ENCODE measurements at regions of chr2 and their contacts with region 1.

Region 1: GRCh38 chr2:152635635-152636298 is 81.5 kb downstream of the PRPF40A start:
- DNase-seq: peak; percentile 46 to 60
- ATAC-seq: peak; percentile 63 to 81; a peak in 4 of 6 replicates
- H3K4me3 ChIP-seq: no peak overlapping the region
- H3K27ac ChIP-seq: no peak overlapping the region
- H3K4me1 ChIP-seq: no peaks in the 10 kb centered on the region
- CTCF ChIP-seq: peak; percentile 89
- EP300 ChIP-seq: no peak
- POLR2A ChIP-seq: no peak
- RAD21 ChIP-seq: peak; percentile 87 to 89

Region 2: DNA sequence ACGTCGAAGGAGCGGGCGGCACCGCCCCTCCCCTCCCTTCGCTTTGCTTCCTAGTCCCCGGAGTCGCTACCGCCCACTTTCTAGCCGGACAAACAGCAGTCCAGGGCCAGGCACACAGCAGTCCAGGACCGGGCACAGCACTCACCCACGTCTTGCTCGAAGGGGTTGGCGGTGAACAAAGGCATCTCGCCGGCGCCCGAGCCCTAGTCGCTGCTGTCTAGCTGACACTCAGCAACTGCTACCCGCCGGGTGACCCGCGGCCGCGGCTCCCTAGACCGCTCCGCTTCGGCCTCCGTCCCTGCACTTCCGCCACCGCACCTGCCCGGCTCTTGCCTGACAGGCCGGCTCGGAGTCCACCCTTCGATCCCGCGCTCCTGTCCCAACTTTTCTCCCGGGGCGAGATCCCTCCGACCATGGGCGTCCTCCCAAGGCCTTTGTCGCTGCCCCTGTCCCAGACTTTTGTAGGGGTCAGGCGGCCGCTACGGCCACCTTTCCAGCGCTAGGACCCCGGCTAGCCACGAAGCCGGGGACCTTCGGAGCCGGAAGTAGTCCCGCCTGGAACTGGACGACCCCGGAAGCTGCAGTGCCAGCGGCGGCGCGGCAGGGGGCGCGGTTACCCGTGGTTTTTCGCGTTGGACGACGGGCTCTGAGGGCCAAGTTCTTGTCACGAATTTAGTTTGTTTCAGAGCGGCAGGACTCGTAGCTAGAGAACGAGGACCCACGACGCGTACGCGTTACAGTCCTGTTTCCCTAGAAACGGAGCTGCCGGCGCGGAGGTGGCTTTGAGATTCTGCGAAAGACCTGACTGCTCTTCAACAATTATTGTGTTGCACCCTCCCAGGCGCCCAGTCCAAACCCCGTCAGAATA is 460.1 kb before region 1 on chr2 and contains the start of gene STAM2:
- CTCF ChIA-PET with region 1: interaction called, 52 read pairs
- POLR2A ChIA-PET with region 1: interaction called, 4 read pairs
- DNase-seq: peak; percentile 88 to 93
- ATAC-seq: peak; percentile 91
- H3K4me3 ChIP-seq: peak within 1 kb of the TSS; percentile 64
- H3K27ac ChIP-seq: peak within 1 kb of the TSS; percentile 94 to 97
- H3K4me1 ChIP-seq: peaks cover 33% of the 10 kb centered on the region
- CTCF ChIP-seq: peak; percentile 92
- EP300 ChIP-seq: no peak
- POLR2A ChIP-seq: peak; percentile 84
- RAD21 ChIP-seq: peak; percentile 92 to 97
- polyA plus RNA-seq, gene STAM2: 25.7 and 34.5 TPM in 2 replicates

Region 3: DNA sequence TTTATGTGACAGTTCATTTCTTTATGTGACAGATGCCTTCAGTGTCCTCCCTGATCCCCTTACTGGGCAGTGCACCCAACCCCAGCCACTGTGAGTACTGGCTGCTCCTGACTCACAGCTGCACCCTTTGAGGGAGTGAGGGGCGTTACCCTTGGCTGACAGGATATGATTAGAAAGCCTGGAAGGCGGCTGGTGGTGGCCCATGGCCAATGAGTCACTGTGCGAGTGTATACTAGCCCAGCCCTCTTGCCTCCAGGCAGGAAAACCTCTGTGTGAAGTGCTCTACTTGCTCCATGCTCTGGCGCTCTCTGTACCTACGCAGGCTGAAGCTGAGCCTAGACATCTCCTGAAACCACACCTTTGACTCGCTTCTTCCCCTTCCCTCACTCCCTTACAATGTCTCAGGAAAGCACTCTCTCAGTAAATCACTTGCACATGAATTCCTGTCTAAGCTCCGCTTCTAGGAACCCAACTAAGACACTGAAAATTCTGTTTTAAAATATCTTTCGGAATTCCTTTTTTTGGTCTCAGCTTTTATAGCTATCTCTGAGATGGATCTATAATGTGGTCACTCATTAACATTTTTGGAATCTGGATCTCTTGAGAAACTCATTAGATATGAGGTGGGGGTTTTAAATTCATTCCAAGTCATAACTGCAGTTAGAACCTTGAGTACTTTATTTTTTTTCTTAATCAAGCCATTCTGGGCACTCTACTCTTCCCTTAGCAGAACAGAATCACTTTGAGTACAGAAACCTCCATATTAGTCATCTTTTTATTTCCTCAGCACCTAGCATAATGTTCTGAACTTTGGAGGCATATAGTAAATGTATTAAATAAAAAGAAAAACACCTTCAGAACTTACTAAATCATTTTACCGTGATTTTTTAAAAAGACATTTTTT is 435.0 kb before region 1 on chr2:
- CTCF ChIA-PET with region 1: interaction called, 21 read pairs
- POLR2A ChIA-PET with region 1: no interaction called
- DNase-seq: peak; percentile 82 to 92
- ATAC-seq: peak; percentile 100
- H3K4me3 ChIP-seq: no peak overlapping the region
- H3K27ac ChIP-seq: peak overlapping the region; percentile 52 to 74
- H3K4me1 ChIP-seq: peaks cover 16% of the 10 kb centered on the region
- CTCF ChIP-seq: no peak
- EP300 ChIP-seq: peak in 1 of 2 experiments; percentile 45; a peak in 2 of 5 replicates
- POLR2A ChIP-seq: no peak
- RAD21 ChIP-seq: peak; percentile 14 to 51; a peak in 3 of 5 replicates

Region 4: GRCh38 chr2:152613235-152613634 is 22.5 kb before region 1 on chr2:
- CTCF ChIA-PET with region 1: interaction called, 12 read pairs
- POLR2A ChIA-PET with region 1: no interaction called
- DNase-seq: no peak
- ATAC-seq: no peak
- H3K4me3 ChIP-seq: no peak overlapping the region
- H3K27ac ChIP-seq: no peak overlapping the region
- H3K4me1 ChIP-seq: peaks cover 7% of the 10 kb centered on the region; the same call in 2 of the 3 replicates
- CTCF ChIP-seq: no peak
- EP300 ChIP-seq: no peak
- POLR2A ChIP-seq: no peak
- RAD21 ChIP-seq: no peak

Region 5: GRCh38 chr2:152790883-152791282 is 155.1 kb after region 1 on chr2:
- CTCF ChIA-PET with region 1: no interaction called
- POLR2A ChIA-PET with region 1: no interaction called
- DNase-seq: no peak
- ATAC-seq: no peak
- H3K4me3 ChIP-seq: no peak overlapping the region
- H3K27ac ChIP-seq: no peak overlapping the region
- H3K4me1 ChIP-seq: no peaks in the 10 kb centered on the region
- CTCF ChIP-seq: no peak
- EP300 ChIP-seq: no peak
- POLR2A ChIP-seq: no peak
- RAD21 ChIP-seq: no peak

Measured in A549 (cell line).